GM13976 (cell line): ENCODE measurements at regions of chr1 and their contacts with region 1.

Region 1: DNA sequence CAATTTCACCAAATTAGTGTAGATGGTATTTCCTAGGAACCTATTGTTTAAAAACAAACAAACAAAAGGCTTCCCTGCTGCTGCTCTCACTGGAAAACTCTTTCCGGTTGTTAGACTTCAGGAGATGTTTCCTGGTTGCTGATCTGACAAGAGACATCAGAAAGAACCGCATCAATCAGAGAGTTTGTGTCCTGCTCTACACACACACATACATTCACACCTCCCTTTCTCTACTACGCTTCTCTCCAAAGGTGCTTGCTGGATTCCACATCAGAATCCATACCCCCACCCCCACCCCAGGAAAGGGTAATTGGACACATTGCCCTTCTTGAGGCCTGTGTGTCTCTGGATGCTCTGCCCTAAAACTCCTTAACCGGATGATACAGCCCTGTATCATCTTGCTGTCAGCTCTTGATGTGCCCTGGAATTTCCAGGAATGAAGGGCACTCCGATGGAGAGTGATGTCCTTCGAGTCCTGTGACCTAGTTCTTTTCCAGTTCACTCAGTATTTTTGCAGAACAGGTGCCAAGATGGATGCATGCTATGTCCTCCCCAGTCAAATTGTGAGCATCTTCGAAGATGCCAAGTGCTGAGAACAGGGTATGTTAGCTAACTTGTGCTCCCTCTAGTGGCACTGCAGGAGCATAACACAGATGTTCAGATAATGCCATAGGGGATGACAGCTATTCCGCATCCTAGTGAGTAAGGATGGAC is 113.7 kb upstream of the SLC35F3 start:
- DNase-seq: peak; percentile 51
- CTCF ChIP-seq: peak; percentile 90

Region 2: GRCh38 chr1:233440951-233441401 is 349.8 kb before region 1 on chr1:
- in situ Hi-C with region 1: loop called (anchors 25 kb)
- DNase-seq: peak; percentile 41
- CTCF ChIP-seq: peak; percentile 40